H1 (cell line): ENCODE measurements at regions of chr16 and their contacts with region 1.

Region 1: GRCh38 chr16:14632692-14633569 is at the start of gene BFAR:
- DNase-seq: peak; percentile 95 to 98
- H3K4me3 ChIP-seq: peak within 1 kb of the TSS; percentile 86 to 98 (median 96)
- H3K27ac ChIP-seq: peak within 1 kb of the TSS; percentile 86
- H3K4me1 ChIP-seq: peaks cover 16 to 23% (median 23%) of the 10 kb centered on the region in 4 experiments
- H3K27me3 ChIP-seq: no peaks in the 10 kb centered on the region
- CTCF ChIP-seq: no peak
- EP300 ChIP-seq: peak in 1 of 2 experiments; percentile 1; a peak in 2 of 3 replicates
- POLR2A ChIP-seq: peak; percentile 98
- RAD21 ChIP-seq: no peak
- total RNA-seq, gene BFAR: 75.5 and 78.2 TPM in 2 replicates

Region 2: GRCh38 chr16:14510939-14511799 is 121.8 kb before region 1 on chr16:
- CTCF ChIA-PET with region 1: no interaction called
- POLR2A ChIA-PET with region 1: no interaction called
- DNase-seq: no peak
- H3K4me3 ChIP-seq: no peak overlapping the region
- H3K27ac ChIP-seq: no peak overlapping the region
- H3K4me1 ChIP-seq: peaks cover 0 to 8% (median 6%) of the 10 kb centered on the region in 4 experiments; a peak in 5 of 7 replicates
- H3K27me3 ChIP-seq: no peaks in the 10 kb centered on the region
- CTCF ChIP-seq: no peak
- EP300 ChIP-seq: no peak
- POLR2A ChIP-seq: no peak
- RAD21 ChIP-seq: no peak

Region 3: GRCh38 chr16:14609716-14610115 is 23.2 kb before region 1 on chr16:
- CTCF ChIA-PET with region 1: no interaction called
- POLR2A ChIA-PET with region 1: interaction called, 19 read pairs
- DNase-seq: no peak
- H3K4me3 ChIP-seq: no peak overlapping the region
- H3K27ac ChIP-seq: no peak overlapping the region
- H3K4me1 ChIP-seq: peaks cover 0 to 3% (median 0%) of the 10 kb centered on the region in 4 experiments; a peak in 1 of 7 replicates
- H3K27me3 ChIP-seq: no peaks in the 10 kb centered on the region
- CTCF ChIP-seq: no peak
- EP300 ChIP-seq: no peak
- POLR2A ChIP-seq: no peak
- RAD21 ChIP-seq: no peak

Region 4: GRCh38 chr16:14616280-14616679 is 16.7 kb before region 1 on chr16:
- CTCF ChIA-PET with region 1: no interaction called
- POLR2A ChIA-PET with region 1: interaction called, 19 read pairs
- DNase-seq: no peak
- H3K4me3 ChIP-seq: no peak overlapping the region
- H3K27ac ChIP-seq: no peak overlapping the region
- H3K4me1 ChIP-seq: no peaks in the 10 kb centered on the region
- H3K27me3 ChIP-seq: no peaks in the 10 kb centered on the region
- CTCF ChIP-seq: no peak
- EP300 ChIP-seq: no peak
- POLR2A ChIP-seq: no peak
- RAD21 ChIP-seq: no peak